Mucosa of descending colon (tissue), 3 donors: ENCODE measurements at regions of chr22 and their contacts with region 1.

Region 1: DNA sequence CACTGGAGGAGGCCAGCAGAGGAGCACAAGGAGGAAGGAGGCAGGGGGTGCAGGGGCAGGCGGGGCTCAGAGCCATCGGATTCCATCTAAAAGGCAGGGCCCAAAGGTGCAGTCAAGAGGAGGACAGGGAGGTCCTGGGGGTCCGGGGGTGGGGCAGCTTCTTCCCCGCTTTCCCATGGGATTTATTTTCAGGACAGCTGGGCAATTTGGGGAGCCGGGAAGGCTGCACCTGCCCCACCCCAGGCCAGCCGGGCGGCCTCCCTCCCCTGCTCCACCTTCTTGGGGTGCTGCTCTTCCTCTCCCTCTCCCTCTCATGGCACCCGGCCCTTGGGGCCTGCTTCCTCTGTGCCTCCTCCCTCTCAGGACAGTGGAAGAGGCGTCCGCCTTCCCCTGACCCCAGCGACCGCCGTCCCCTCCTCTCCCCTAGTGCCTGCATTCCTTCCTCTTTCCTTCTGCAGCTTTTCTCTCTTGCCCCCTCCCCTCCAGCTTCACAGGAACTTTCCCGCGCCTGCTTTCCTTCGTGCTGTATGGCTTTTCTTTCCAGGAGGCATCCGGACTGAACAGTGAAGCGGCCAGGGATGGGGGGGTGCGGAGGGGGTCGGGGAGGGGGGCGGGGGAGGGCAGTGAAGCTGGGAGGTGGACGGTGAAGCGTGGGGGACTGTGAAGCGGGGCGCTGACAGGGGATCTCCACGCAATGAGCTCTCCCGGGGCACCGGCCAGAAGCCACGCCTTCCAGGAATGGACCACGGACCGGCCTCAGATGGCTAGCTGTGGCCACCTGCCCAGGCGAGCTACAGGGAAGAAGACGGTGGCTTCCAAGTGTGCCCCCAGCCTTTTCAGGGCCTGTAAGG is 26.9 kb downstream of the APOBEC3H start:
- DNase-seq: no peak
- ATAC-seq: no peak
- H3K4me3 ChIP-seq: no peak overlapping the region
- H3K4me1 ChIP-seq: peaks cover 8% of the 10 kb centered on the region
- CTCF ChIP-seq: no peak

Region 2: GRCh38 chr22:38820020-38820419 is 304.0 kb before region 1 on chr22:
- intact Hi-C with region 1: no loop called
- DNase-seq: no peak
- ATAC-seq: no peak
- H3K4me3 ChIP-seq: no peak overlapping the region
- H3K4me1 ChIP-seq: no peaks in the 10 kb centered on the region
- CTCF ChIP-seq: no peak

Region 3: DNA sequence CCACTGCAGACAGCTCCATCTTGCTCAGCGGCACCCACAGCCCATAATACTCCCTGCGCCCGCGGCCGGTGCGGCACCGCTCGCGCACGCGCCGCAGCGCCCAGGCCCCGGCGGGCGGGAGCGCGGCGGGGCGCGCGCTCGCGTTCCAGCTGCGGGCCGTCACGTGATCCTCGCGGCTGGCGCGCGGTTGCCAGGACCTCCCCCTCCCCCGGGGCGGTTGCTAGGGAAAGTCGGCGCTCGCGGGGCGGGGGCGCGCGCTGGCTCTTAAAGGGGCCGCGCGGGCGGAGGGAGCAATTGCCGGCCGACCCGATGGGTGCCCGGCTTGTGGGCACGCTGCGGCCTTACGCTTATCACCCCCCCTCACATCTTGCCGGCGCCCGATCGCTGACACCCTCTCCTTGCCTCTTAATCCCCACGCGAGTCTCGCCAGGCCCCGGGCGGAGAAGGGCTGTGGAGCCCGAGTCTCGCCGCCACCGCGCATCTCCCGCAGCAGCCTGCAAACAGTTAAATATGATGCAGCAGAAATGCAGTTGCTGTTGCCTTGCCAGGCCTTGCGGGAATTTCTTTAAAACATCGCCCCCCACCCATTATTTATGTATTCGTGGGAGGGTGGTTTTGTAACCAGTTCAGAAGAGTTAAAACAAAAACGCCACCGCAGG is 251.7 kb before region 1 on chr22 and contains the start of gene CBX6:
- intact Hi-C with region 1: loop called in 1 of 2 experiments (anchors 10 kb)
- DNase-seq: peak; percentile 94
- ATAC-seq: peak; percentile 83
- H3K4me3 ChIP-seq: peak within 1 kb of the TSS; percentile 40
- H3K4me1 ChIP-seq: peaks cover 14% of the 10 kb centered on the region
- CTCF ChIP-seq: no peak
- total RNA-seq, gene CBX6: 15.7 to 84.0 (median 23.6) TPM